ENCODE measurements at regions of chr2 and their contacts with region 1.

Region 1: DNA sequence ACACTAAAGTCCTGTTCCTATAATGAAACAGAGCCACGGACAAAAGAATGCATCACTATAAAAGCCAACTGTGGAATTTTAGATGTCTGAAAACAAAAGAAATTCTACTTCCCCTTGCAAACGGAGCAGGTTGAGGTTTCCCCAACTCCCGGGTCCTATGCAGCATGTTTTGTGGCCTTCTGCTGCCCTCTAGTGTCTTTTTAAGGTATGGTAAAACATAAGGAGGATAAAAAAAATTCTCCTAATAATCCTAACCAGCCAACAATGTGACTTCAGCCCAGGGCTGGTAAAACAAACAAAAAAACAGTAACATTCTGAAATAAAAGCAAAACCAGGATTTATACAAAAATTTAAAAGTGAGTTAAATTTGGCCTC is 539.5 kb downstream of the NRXN1 start:
- DNase-seq: peak; percentile 56
- H3K4me3 ChIP-seq: no peak overlapping the region
- H3K27ac ChIP-seq: no peak overlapping the region
- H3K4me1 ChIP-seq: no peaks in the 10 kb centered on the region
- H3K27me3 ChIP-seq: no peaks in the 10 kb centered on the region
- CTCF ChIP-seq: peak; percentile 60 to 61
- POLR2A ChIP-seq: no peak

Region 2: GRCh38 chr2:48600204-48600813 is 1892.2 kb before region 1 on chr2:
- CTCF ChIA-PET with region 1: interaction called, 5 read pairs
- POLR2A ChIA-PET with region 1: no interaction called
- dilution Hi-C with region 1: no loop called
- intact Hi-C with region 1: loop called (anchors 5 kb)
- DNase-seq: peak; percentile 78
- H3K4me3 ChIP-seq: no peak overlapping the region
- H3K27ac ChIP-seq: no peak overlapping the region
- H3K4me1 ChIP-seq: no peaks in the 10 kb centered on the region
- H3K27me3 ChIP-seq: no peaks in the 10 kb centered on the region
- CTCF ChIP-seq: peak; percentile 43 to 61
- POLR2A ChIP-seq: no peak

Region 3: GRCh38 chr2:48946449-48947048 is 1545.9 kb before region 1 on chr2:
- CTCF ChIA-PET with region 1: interaction called, 7 read pairs
- POLR2A ChIA-PET with region 1: no interaction called
- dilution Hi-C with region 1: no loop called
- intact Hi-C with region 1: loop called (anchors 1 kb)
- DNase-seq: peak; percentile 56
- H3K4me3 ChIP-seq: no peak overlapping the region
- H3K27ac ChIP-seq: no peak overlapping the region
- H3K4me1 ChIP-seq: no peaks in the 10 kb centered on the region
- H3K27me3 ChIP-seq: no peaks in the 10 kb centered on the region
- CTCF ChIP-seq: peak; percentile 58 to 64
- POLR2A ChIP-seq: no peak

Region 4: DNA sequence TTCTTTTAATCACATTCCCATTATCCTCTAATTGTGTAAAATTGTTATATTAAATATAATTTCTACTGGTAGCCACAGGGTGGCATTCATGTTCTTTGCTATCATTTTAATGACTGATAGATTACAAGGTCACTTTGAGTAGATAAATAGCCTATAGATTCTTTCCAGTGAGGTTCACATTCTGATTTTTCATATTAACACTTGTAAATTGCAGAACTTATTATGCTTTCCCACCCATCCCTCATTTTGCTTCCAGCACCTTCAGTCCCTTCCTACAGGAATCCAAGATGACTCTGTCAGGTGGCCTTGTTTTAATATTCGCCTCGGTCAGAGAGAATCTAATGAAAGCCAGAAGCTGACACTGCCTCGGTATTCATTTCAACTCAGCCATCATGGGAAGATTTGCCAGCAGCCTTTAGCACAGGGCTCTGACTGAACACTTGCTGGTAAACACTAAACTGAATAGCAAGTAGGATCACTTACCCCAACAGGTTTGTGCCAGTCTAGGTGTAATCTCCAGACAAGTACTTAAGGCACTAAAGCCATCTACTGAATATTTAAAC is 1237.0 kb before region 1 on chr2:
- CTCF ChIA-PET with region 1: no interaction called
- POLR2A ChIA-PET with region 1: no interaction called
- dilution Hi-C with region 1: no loop called
- intact Hi-C with region 1: loop called (anchors 2 kb)
- DNase-seq: peak; percentile 6
- H3K4me3 ChIP-seq: no peak overlapping the region
- H3K27ac ChIP-seq: no peak overlapping the region
- H3K4me1 ChIP-seq: no peaks in the 10 kb centered on the region
- H3K27me3 ChIP-seq: no peaks in the 10 kb centered on the region
- CTCF ChIP-seq: no peak
- POLR2A ChIP-seq: no peak

Region 5: DNA sequence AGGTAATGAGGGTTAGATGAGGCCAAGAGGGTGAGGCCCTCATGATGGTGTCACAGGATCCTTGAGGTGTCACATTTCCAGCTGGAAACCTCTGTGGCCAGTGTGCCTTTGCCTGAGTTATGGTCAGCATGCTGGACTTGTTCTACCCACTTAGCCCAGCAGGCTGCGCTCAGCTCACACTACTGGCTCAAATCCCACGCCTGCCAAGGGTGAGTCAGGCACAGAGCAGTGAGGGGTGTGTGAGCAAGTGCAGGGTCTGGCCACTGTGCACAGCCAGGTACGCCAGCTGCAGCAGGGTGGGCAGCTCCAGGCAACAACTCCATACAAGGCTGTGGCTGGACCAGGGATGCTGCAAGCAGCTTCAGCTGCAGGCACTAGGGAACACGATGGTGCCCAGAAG is 721.5 kb before region 1 on chr2:
- CTCF ChIA-PET with region 1: no interaction called
- POLR2A ChIA-PET with region 1: no interaction called
- dilution Hi-C with region 1: no loop called
- intact Hi-C with region 1: loop called (anchors 5 kb)
- DNase-seq: no peak
- H3K4me3 ChIP-seq: no peak overlapping the region
- H3K27ac ChIP-seq: no peak overlapping the region
- H3K4me1 ChIP-seq: no peaks in the 10 kb centered on the region
- H3K27me3 ChIP-seq: no peaks in the 10 kb centered on the region
- CTCF ChIP-seq: peak in 1 of 2 donors; percentile 15
- POLR2A ChIP-seq: no peak

Region 6: DNA sequence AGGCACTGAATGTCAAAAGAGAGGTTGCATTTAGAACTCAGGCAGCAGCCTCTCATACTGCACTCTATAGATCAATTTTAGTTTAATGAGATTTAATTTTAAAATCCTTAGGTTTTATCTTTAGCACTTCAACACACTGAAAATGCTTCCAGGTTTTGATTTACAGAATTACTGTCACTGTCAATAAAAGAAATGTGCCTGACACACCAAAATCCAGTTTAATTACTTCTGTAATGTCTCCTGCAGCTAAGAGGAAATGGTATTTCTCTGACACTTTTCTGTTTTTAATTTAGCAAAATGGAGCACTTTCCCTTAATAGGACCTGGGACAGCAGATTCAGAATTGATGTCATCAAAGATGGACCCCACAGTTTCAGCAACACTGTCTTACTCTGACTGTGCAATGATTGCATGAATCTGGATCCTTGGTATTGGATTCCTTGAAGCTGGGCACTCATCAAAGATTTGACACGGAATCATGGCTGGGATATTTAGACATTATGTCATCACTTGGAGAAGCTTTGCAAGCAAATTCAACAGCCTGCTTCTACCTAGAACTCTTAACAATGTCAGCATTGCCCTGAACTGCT is 37.0 kb before region 1 on chr2:
- CTCF ChIA-PET with region 1: no interaction called
- POLR2A ChIA-PET with region 1: no interaction called
- dilution Hi-C with region 1: no loop called
- intact Hi-C with region 1: no loop called
- DNase-seq: no peak
- H3K4me3 ChIP-seq: no peak overlapping the region
- H3K27ac ChIP-seq: no peak overlapping the region
- H3K4me1 ChIP-seq: no peaks in the 10 kb centered on the region
- H3K27me3 ChIP-seq: no peaks in the 10 kb centered on the region
- CTCF ChIP-seq: no peak
- POLR2A ChIP-seq: no peak

Region 7: GRCh38 chr2:50620783-50621182 is 128.3 kb after region 1 on chr2:
- CTCF ChIA-PET with region 1: no interaction called
- POLR2A ChIA-PET with region 1: no interaction called
- dilution Hi-C with region 1: no loop called
- intact Hi-C with region 1: no loop called
- DNase-seq: no peak
- H3K4me3 ChIP-seq: no peak overlapping the region
- H3K27ac ChIP-seq: no peak overlapping the region
- H3K4me1 ChIP-seq: no peaks in the 10 kb centered on the region
- H3K27me3 ChIP-seq: no peaks in the 10 kb centered on the region
- CTCF ChIP-seq: no peak
- POLR2A ChIP-seq: no peak

Region 8: GRCh38 chr2:51219468-51219867 is 727.0 kb after region 1 on chr2:
- CTCF ChIA-PET with region 1: no interaction called
- POLR2A ChIA-PET with region 1: no interaction called
- dilution Hi-C with region 1: no loop called
- intact Hi-C with region 1: no loop called
- DNase-seq: no peak
- H3K4me3 ChIP-seq: no peak overlapping the region
- H3K27ac ChIP-seq: no peak overlapping the region
- H3K4me1 ChIP-seq: no peaks in the 10 kb centered on the region
- H3K27me3 ChIP-seq: no peaks in the 10 kb centered on the region
- CTCF ChIP-seq: no peak
- POLR2A ChIP-seq: no peak

Measured in endothelial cell of umbilical vein (primary cell).